MCF 10A (cell line): ENCODE measurements at regions of chr5 and their contacts with region 1.

Region 1: DNA sequence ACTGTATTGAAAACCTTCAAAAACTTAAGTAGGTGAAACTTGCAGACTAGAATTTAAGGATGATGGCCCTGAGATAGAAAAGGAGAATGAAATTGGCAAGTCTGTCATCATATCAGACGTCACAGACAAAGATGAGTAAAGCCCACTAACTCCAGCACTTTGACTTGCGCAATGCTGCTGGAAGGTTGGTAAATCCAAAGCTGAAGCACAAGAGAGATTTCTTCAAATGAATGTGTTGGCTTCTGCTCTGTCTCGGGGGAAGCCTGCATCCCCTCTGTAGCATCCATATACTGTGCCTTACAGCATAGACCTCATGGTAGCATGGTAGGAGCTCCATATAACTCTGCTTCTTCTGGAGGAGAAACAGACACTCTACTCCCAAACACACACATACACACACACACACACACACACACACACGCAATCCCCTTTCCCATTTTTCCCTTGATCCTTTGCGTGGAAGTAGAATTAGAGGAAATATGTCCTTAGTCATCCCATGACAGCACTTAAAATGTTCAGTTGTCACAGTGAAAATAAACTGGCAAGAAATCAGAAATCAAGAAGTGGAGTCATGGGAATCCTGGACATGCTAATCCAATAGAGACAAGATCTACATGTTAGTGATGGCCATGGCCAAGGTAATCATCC is 241.5 kb downstream of the NR3C1 start:
- DNase-seq: peak; percentile 96
- H3K4me3 Mint-ChIP-seq: no peak overlapping the region
- H3K27ac Mint-ChIP-seq: peak overlapping the region; percentile 25
- H3K4me1 Mint-ChIP-seq: peaks cover 38% of the 10 kb centered on the region
- H3K27me3 Mint-ChIP-seq: no peaks in the 10 kb centered on the region
- CTCF ChIP-seq: no peak

Region 2: GRCh38 chr5:143262393-143263174 is 100.6 kb after region 1 on chr5:
- CTCF ChIA-PET with region 1: no interaction called
- POLR2A ChIA-PET with region 1: no interaction called
- intact Hi-C with region 1: loop called (anchors 5 kb)
- DNase-seq: peak; percentile 95
- H3K4me3 Mint-ChIP-seq: peak overlapping the region; percentile 7
- H3K27ac Mint-ChIP-seq: peak overlapping the region; percentile 61
- H3K4me1 Mint-ChIP-seq: peaks cover 35% of the 10 kb centered on the region
- H3K27me3 Mint-ChIP-seq: no peaks in the 10 kb centered on the region
- CTCF ChIP-seq: no peak

Region 3: GRCh38 chr5:143685246-143685802 is 523.3 kb after region 1 on chr5:
- CTCF ChIA-PET with region 1: no interaction called
- POLR2A ChIA-PET with region 1: no interaction called
- intact Hi-C with region 1: loop called (anchors 10 kb)
- DNase-seq: peak; percentile 49
- H3K4me3 Mint-ChIP-seq: no peak overlapping the region
- H3K27ac Mint-ChIP-seq: no peak overlapping the region
- H3K4me1 Mint-ChIP-seq: no peaks in the 10 kb centered on the region
- H3K27me3 Mint-ChIP-seq: no peaks in the 10 kb centered on the region
- CTCF ChIP-seq: peak; percentile 51

Region 4: DNA sequence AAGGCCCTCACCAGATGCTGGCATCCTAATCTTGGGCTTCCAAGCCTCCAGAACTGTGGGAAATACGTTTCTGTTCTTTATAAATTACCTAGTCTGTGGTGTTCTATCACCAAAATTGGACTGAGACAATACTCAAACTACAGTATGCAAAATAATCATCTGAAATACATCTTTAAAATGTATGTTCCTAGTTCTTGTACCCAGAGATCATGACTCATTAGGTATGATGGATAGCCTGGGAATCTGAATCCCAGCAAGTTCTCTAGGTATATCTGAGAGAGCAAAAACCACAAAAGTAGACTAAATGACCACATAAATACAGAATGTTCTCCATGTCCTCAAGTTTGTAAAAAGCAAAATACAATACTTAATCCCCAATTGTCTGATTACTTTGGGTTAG is 842.1 kb after region 1 on chr5:
- CTCF ChIA-PET with region 1: no interaction called
- POLR2A ChIA-PET with region 1: no interaction called
- intact Hi-C with region 1: no loop called
- DNase-seq: peak; percentile 40
- H3K4me3 Mint-ChIP-seq: no peak overlapping the region
- H3K27ac Mint-ChIP-seq: peak overlapping the region; percentile 30
- H3K4me1 Mint-ChIP-seq: peaks cover 13% of the 10 kb centered on the region
- H3K27me3 Mint-ChIP-seq: no peaks in the 10 kb centered on the region
- CTCF ChIP-seq: no peak